Right ventricle myocardium inferior (tissue), 1 donor: ENCODE measurements at regions of chr7 and their contacts with region 1.

Region 1: GRCh38 chr7:129664029-129665012 is 52.8 kb downstream of the NRF1 start:
- DNase-seq: no peak
- ATAC-seq: no peak

Region 2: DNA sequence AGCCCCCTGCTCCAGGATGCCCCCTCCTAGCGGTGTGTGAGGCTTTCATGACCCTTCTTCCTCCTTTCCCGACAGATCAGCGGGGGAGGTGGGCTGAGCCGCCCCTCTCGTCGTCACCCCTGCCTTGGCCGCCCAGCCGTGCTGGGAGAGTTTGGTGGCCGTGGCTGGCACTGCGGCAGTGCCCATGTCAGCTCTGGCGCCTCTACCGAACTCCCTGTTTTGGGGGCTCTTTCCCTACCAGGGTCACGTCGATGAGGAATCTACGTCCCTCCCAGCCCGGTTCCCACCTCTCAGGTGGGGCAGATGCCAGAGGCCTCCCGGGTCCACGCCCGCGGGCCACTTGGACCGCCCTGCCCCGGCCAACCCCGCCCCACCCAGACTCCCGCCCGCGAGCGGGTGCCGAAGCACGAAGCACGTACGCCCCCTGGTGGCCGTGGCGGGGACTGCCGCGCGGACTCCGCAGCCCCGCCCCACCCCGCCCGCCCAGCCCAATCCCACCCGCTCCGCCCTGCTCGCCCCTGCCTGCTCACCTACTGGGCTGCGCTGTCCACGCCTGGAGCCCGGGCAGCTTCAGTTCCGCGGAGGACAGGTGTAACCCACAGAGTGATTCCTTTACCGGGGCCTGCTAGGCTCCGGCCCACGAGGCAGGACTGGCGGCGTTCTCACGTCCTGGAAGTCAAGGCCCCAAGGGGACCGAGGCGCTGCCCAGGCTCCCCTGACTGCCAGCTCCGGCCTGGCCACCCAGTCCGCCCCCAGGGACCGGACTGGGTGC is 161.4 kb after region 1 on chr7:
- intact Hi-C with region 1: loop called (anchors 1 kb)
- DNase-seq: peak; percentile 96
- ATAC-seq: peak; percentile 89